ENCODE measurements at regions of chr7 and their contacts with region 1.

Region 1: DNA sequence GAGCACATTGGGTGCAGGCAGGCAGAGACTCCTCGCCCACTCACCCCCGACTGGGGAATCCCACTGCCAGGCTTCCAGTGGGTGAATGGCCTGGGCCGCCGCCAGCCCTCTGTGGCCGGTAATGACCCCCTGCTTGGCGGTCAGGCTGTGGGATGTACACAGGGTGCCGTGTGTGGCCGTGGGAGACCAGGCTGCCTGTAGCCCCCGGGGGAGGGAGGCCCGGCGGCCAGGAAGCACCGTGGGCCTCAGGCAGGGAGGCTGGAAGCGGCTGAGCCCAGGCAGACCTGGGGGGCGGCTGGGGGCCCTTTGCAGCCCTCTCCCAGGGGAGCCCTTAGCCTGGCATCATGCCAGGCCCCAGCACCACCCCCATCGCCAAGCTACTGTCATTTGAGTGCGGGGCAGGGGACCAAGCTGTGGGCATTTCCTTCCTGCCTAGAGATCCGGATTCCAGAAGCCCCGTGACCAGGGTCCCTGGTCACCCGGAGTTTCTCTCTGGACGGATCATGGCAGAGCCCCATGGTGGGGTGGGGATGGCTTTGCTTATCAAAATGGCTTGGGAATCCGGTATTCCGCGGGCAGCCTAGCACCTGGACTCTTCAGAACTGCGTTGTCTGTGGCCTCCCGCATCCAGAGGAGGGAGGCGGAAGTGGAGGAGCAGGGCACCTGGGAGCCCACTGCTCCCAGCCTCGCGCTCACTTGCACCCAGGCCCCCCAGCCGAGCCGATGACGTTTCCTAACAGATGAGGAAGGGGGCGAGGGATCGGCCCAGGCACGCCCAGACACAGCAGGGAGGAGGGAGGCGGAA is 1.1 kb downstream of the TTYH3 start:
- DNase-seq: peak; percentile 80
- ATAC-seq: peak; percentile 15
- H3K4me3 Mint-ChIP-seq: peak overlapping the region; percentile 96
- H3K27ac Mint-ChIP-seq: peak overlapping the region; percentile 91
- H3K4me1 Mint-ChIP-seq: peaks cover 16% of the 10 kb centered on the region
- H3K27me3 Mint-ChIP-seq: no peaks in the 10 kb centered on the region
- CTCF ChIP-seq: no peak

Region 2: DNA sequence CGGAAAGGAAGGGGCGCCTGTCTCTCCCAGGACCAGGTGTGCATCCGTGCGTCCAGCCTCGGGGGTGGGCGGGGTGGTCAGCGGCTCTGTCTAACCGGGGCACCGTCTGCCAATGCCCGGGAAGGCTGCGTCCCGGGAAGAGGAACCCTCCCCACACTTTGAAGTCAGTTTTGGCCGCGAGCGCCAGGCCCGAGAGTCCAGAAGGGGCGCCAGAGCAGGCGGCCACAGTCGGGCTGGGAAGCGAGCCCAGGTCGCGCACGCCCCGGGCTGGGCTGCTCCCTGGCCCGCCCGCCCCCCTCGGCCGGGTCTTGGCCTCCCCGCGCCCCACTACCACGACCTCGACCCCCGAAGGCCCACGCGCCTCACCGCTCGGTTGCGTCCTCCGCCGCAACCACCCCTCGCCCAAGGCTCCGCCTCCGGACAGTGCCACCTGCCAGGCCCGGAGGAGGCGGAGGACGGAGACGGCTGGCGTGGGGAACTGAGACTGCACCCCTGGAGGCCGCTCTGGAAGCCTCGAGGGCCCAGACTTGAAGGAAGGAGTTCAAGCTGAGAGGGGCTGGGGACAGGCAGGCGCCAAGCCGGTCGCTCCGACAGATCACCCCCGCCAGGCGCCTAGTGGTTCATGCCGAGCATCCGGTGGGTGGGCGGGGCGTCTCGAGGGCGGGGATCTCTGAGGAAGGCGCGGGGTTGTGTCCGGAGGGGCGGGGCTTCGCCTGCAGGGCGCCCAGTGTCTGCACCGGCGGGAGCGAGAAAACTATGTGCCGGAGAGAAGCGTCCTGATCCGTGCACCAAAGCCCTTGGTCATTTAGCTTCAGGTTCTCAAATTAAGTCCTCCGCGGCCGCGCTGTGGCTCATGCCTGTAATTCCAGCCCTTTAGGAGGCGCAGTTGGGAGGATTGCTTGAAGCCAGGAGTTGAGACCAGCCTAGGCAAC is 77.5 kb before region 1 on chr7 and contains the start of gene BRAT1:
- CTCF ChIA-PET with region 1: no interaction called
- POLR2A ChIA-PET with region 1: no interaction called
- intact Hi-C with region 1: loop called (anchors 10 kb)
- DNase-seq: peak; percentile 99
- ATAC-seq: peak; percentile 92
- H3K4me3 Mint-ChIP-seq: peak within 1 kb of the TSS; percentile 88
- H3K27ac Mint-ChIP-seq: peak within 1 kb of the TSS; percentile 95
- H3K4me1 Mint-ChIP-seq: peaks cover 36% of the 10 kb centered on the region
- H3K27me3 Mint-ChIP-seq: no peaks in the 10 kb centered on the region
- CTCF ChIP-seq: peak; percentile 73
- total RNA-seq, gene BRAT1: 30.9 to 32.6 TPM

Region 3: GRCh38 chr7:2567679-2568278 is 65.2 kb before region 1 on chr7:
- CTCF ChIA-PET with region 1: no interaction called
- POLR2A ChIA-PET with region 1: no interaction called
- intact Hi-C with region 1: no loop called
- DNase-seq: no peak
- ATAC-seq: no peak
- H3K4me3 Mint-ChIP-seq: no peak overlapping the region
- H3K27ac Mint-ChIP-seq: no peak overlapping the region
- H3K4me1 Mint-ChIP-seq: peaks cover 6% of the 10 kb centered on the region
- H3K27me3 Mint-ChIP-seq: no peaks in the 10 kb centered on the region
- CTCF ChIP-seq: peak; percentile 18